ENCODE measurements at regions of chr1 and their contacts with region 1.

Region 1: GRCh38 chr1:50774759-50775351 is 185.2 kb downstream of the FAF1 start:
- DNase-seq: peak; percentile 80
- H3K4me3 ChIP-seq: no peak overlapping the region
- H3K27ac ChIP-seq: no peak overlapping the region
- H3K4me1 ChIP-seq: no peaks in the 10 kb centered on the region
- H3K27me3 ChIP-seq: no peaks in the 10 kb centered on the region

Region 2: GRCh38 chr1:51019811-51020210 is 245.0 kb after region 1 on chr1:
- in situ Hi-C with region 1: loop called (anchors 10 kb)
- DNase-seq: peak; percentile 32
- H3K4me3 ChIP-seq: no peak overlapping the region
- H3K27ac ChIP-seq: no peak overlapping the region
- H3K4me1 ChIP-seq: no peaks in the 10 kb centered on the region
- H3K27me3 ChIP-seq: no peaks in the 10 kb centered on the region

Region 3: GRCh38 chr1:51192213-51192843 is 417.5 kb after region 1 on chr1:
- in situ Hi-C with region 1: loop called (anchors 10 kb)
- DNase-seq: peak; percentile 85
- H3K4me3 ChIP-seq: no peak overlapping the region
- H3K27ac ChIP-seq: no peak overlapping the region
- H3K4me1 ChIP-seq: no peaks in the 10 kb centered on the region
- H3K27me3 ChIP-seq: no peaks in the 10 kb centered on the region